Dendritic cell treated with granulocyte-macrophage colony-stimulating factor and Interleukin-4, amounts not matched to agents 40 ng/mL and 50 ng/mL, for 4 days (primary cell): ENCODE measurements at regions of chr9 and their contacts with region 1.

Region 1: DNA sequence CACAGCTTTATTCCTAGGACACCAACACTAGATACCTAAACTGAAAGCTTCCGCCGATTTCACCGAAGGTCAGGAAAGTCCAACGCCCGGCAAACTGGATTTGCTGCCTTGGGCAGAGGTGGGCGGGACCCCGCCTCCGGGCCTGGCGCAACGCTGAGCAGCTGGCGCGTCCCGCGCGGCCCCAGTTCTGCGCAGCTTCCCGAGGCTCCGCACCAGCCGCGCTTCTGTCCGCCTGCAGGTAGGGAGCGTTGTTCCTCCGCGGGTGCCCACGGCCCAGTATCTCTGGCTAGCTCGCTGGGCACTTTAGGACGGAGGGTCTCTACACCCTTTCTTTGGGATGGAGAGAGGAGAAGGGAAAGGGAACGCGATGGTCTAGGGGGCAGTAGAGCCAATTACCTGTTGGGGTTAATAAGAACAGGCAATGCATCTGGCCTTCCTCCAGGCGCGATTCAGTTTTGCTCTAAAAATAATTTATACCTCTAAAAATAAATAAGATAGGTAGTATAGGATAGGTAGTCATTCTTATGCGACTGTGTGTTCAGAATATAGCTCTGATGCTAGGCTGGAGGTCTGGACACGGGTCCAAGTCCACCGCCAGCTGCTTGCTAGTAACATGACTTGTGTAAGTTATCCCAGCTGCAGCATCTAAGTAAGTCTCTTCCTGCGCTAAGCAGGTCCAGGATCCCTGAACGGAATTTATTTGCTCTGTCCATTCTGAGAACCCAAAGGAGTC is at the start of gene CD274:
- H3K4me3 Mint-ChIP-seq: peak within 1 kb of the TSS; percentile 87
- H3K27ac Mint-ChIP-seq: peak within 1 kb of the TSS; percentile 98
- H3K4me1 Mint-ChIP-seq: peaks cover 52% of the 10 kb centered on the region
- H3K27me3 Mint-ChIP-seq: no peaks in the 10 kb centered on the region

Region 2: DNA sequence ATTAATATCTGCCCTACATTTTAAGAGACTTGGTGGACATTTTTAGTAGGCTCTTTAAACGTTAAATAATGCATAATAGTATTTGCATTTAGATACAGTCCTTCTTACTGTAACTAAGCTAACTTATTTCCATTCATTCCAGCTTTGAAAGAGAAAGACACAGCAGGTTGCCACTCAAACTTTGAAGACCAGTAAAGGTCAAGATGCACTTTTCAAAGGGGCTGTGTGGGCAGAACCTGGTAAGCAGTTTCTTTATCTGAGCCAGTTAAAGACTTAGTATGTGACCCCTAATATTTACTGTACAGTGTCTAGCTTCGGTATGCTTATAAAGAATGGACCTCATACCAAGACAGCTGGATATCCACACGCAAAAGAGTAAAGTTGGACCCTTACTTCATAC is 33.6 kb before region 1 on chr9:
- intact Hi-C with region 1: no loop called
- H3K4me3 Mint-ChIP-seq: no peak overlapping the region
- H3K27ac Mint-ChIP-seq: no peak overlapping the region
- H3K4me1 Mint-ChIP-seq: peaks cover 15% of the 10 kb centered on the region
- H3K27me3 Mint-ChIP-seq: no peaks in the 10 kb centered on the region

Region 3: GRCh38 chr9:5478206-5478605 is 27.7 kb after region 1 on chr9:
- intact Hi-C with region 1: no loop called
- H3K4me3 Mint-ChIP-seq: no peak overlapping the region
- H3K27ac Mint-ChIP-seq: peak overlapping the region; percentile 74
- H3K4me1 Mint-ChIP-seq: peaks cover 60% of the 10 kb centered on the region
- H3K27me3 Mint-ChIP-seq: no peaks in the 10 kb centered on the region

Region 4: GRCh38 chr9:5493679-5494511 is 43.4 kb after region 1 on chr9:
- intact Hi-C with region 1: loop called (anchors 5 kb)
- H3K4me3 Mint-ChIP-seq: peak overlapping the region; percentile 30
- H3K27ac Mint-ChIP-seq: peak overlapping the region; percentile 81
- H3K4me1 Mint-ChIP-seq: peaks cover 66% of the 10 kb centered on the region
- H3K27me3 Mint-ChIP-seq: peaks cover 1% of the 10 kb centered on the region

Region 5: GRCh38 chr9:5510360-5510931 is 59.9 kb after region 1 on chr9 and contains the start of gene PDCD1LG2:
- intact Hi-C with region 1: loop called (anchors 5 kb)
- H3K4me3 Mint-ChIP-seq: peak within 1 kb of the TSS; percentile 92
- H3K27ac Mint-ChIP-seq: peak within 1 kb of the TSS; percentile 94
- H3K4me1 Mint-ChIP-seq: peaks cover 83% of the 10 kb centered on the region
- H3K27me3 Mint-ChIP-seq: no peaks in the 10 kb centered on the region

Region 6: DNA sequence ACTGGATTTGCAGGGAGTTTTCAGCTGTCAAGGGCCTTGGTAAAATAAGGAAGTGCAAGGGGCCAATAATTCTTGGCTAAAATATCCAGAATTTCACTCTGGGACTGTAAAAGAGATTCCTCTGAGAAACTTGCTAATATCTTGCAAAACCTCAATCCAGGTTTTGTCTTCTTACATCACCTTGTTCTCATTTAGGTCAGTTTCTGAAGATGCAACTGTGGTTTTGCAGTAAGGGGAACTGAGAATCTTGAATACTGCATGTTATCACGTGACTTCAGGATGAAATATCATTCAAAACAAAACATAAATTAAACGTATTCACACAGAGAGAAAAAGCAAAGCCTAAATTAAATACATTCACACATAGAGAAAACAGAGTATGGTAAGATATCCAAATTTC is 143.4 kb after region 1 on chr9:
- intact Hi-C with region 1: loop called (anchors 5 kb)
- H3K4me3 Mint-ChIP-seq: no peak overlapping the region
- H3K27ac Mint-ChIP-seq: no peak overlapping the region
- H3K4me1 Mint-ChIP-seq: peaks cover 45% of the 10 kb centered on the region
- H3K27me3 Mint-ChIP-seq: peaks cover 5% of the 10 kb centered on the region

Region 7: GRCh38 chr9:5626727-5627634 is 176.5 kb after region 1 on chr9:
- intact Hi-C with region 1: loop called (anchors 1 kb)
- H3K4me3 Mint-ChIP-seq: peak overlapping the region; percentile 90
- H3K27ac Mint-ChIP-seq: peak overlapping the region; percentile 94
- H3K4me1 Mint-ChIP-seq: peaks cover 27% of the 10 kb centered on the region
- H3K27me3 Mint-ChIP-seq: no peaks in the 10 kb centered on the region